Cardiac septum (tissue), 1 donor: ENCODE measurements at regions of chr1 and their contacts with region 1.

Region 1: DNA sequence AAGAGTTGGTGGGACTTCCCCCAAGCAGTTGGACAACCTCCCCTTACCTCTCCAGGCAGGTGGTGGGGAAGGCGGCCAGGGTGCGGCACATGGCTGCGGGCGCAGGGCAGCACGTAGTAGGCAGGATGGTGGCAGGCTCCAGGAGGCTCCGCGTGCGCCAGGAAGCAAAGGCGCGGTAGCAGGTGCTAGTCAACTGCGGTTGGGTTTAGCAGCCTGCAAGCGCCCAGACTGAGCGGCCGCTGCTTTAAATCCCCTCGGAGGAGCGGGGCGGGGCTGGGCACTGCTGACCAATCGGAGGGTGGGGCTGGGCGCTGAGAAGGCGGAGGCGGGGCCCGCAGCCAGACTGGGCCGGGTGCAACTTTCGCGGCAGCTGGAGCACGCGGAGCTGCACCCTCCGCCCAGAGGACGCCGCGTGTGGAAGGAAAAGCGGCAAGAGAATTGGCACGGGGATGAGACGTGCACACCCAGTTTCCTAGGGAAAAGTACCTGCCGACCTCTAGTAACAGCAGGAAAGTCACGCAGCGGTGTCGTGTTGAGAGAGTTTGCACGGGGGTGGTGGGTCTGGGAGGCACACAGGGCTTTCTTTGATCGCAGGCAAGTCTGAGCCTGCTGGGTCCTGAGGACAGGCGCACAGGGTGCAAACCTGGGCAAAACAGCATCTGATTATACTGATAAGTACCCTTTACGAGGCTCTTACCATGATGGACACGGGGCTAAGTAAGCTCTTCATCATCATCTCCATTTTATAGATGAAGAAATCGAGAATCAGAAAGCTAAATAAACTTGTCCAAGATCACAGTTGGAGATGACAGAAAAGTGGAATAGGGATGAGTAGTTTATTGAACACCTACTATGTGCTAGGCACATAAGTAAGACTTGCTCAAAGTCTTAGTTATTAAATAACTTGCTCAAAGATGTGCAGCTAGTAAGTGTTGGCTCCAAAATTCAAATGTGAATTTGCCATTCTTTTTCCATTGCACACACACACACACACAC is at the start of gene RGS16:
- DNase-seq: peak; percentile 97
- total RNA-seq, gene RGS16: 1.9 TPM

Region 2: GRCh38 chr1:182699393-182700350 is 95.2 kb after region 1 on chr1:
- intact Hi-C with region 1: no loop called
- DNase-seq: no peak

Region 3: DNA sequence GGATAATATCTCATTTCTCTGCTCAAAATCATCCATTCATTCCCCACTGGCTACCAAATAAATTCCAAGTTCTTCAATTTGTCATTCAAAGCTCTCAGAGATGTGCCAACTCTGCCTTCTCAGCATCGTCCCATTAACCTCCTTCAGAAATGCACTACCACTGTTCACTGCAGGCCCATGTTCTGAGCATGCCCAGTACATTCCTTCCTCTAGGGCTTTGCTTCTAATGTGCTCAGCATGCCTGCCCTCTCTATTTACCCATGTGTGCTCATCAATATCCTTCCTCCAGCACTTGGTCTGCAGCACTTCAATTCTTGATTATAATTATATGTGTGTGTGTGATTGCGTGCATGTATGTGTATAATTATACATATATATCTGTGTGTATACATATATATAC is 116.0 kb after region 1 on chr1:
- intact Hi-C with region 1: loop called (anchors 5 kb)
- DNase-seq: no peak

Region 4: GRCh38 chr1:182839209-182840065 is 235.0 kb after region 1 on chr1 and contains the start of gene DHX9:
- intact Hi-C with region 1: loop called (anchors 5 kb)
- DNase-seq: peak; percentile 96
- total RNA-seq, gene DHX9: 54.3 TPM